ENCODE measurements at regions of chr18 and their contacts with region 1.

Region 1: GRCh38 chr18:63320046-63320689 is 599 bp upstream of the BCL2 start:
- DNase-seq: peak; percentile 90
- ATAC-seq: peak; percentile 70
- H3K4me3 Mint-ChIP-seq: peak overlapping the region; percentile 98
- H3K27ac Mint-ChIP-seq: peak overlapping the region; percentile 95
- H3K4me1 Mint-ChIP-seq: peaks cover 23% of the 10 kb centered on the region
- H3K27me3 Mint-ChIP-seq: no peaks in the 10 kb centered on the region

Region 2: GRCh38 chr18:63016270-63016669 is 303.9 kb before region 1 on chr18:
- CTCF ChIA-PET with region 1: interaction called, 150 read pairs
- POLR2A ChIA-PET with region 1: no interaction called
- intact Hi-C with region 1: loop called (anchors 1 kb)
- DNase-seq: peak; percentile 64
- ATAC-seq: peak; percentile 64
- H3K4me3 Mint-ChIP-seq: no peak overlapping the region
- H3K27ac Mint-ChIP-seq: no peak overlapping the region
- H3K4me1 Mint-ChIP-seq: no peaks in the 10 kb centered on the region
- H3K27me3 Mint-ChIP-seq: peaks cover 13% of the 10 kb centered on the region

Region 3: GRCh38 chr18:63138436-63139340 is 181.5 kb before region 1 on chr18:
- CTCF ChIA-PET with region 1: interaction called, 46 read pairs
- POLR2A ChIA-PET with region 1: interaction called, 4 read pairs
- intact Hi-C with region 1: no loop called
- DNase-seq: peak; percentile 55
- ATAC-seq: peak; percentile 63
- H3K4me3 Mint-ChIP-seq: peak overlapping the region; percentile 72
- H3K27ac Mint-ChIP-seq: peak overlapping the region; percentile 70
- H3K4me1 Mint-ChIP-seq: peaks cover 54% of the 10 kb centered on the region
- H3K27me3 Mint-ChIP-seq: no peaks in the 10 kb centered on the region

Region 4: DNA sequence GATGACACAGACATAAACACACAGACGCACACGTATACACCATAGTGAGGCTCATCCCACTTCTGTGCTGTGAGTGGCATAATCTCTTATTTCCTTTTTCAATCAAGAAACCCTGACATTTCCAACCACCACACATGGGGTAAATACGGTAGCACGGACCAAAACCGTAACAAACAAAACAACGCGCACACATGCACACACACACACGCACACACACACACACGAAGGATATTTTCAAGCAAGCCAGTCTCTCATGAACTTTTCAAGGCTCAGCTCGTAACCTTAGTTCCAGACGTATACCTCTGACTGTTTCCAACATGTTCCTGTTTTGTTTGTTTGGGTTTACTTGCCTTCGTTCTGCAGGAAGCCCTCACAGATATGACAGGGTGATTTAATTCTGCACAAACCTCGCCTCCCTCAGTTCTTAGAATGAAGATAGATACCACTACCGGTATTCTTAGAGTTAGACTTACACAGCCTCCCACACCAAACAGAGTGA is 120.4 kb before region 1 on chr18:
- CTCF ChIA-PET with region 1: interaction called, 7 read pairs
- POLR2A ChIA-PET with region 1: interaction called, 3 read pairs
- intact Hi-C with region 1: loop called in 1 of 2 experiments (anchors 5 kb)
- DNase-seq: peak; percentile 56
- ATAC-seq: peak; percentile 82
- H3K4me3 Mint-ChIP-seq: no peak overlapping the region
- H3K27ac Mint-ChIP-seq: no peak overlapping the region
- H3K4me1 Mint-ChIP-seq: peaks cover 42% of the 10 kb centered on the region
- H3K27me3 Mint-ChIP-seq: no peaks in the 10 kb centered on the region

Region 5: GRCh38 chr18:63224630-63225029 is 95.5 kb before region 1 on chr18:
- CTCF ChIA-PET with region 1: interaction called, 11 read pairs
- POLR2A ChIA-PET with region 1: no interaction called
- intact Hi-C with region 1: no loop called
- DNase-seq: peak; percentile 72
- ATAC-seq: peak; percentile 99
- H3K4me3 Mint-ChIP-seq: peak overlapping the region; percentile 26
- H3K27ac Mint-ChIP-seq: peak overlapping the region; percentile 86
- H3K4me1 Mint-ChIP-seq: peaks cover 67% of the 10 kb centered on the region
- H3K27me3 Mint-ChIP-seq: no peaks in the 10 kb centered on the region

Region 6: DNA sequence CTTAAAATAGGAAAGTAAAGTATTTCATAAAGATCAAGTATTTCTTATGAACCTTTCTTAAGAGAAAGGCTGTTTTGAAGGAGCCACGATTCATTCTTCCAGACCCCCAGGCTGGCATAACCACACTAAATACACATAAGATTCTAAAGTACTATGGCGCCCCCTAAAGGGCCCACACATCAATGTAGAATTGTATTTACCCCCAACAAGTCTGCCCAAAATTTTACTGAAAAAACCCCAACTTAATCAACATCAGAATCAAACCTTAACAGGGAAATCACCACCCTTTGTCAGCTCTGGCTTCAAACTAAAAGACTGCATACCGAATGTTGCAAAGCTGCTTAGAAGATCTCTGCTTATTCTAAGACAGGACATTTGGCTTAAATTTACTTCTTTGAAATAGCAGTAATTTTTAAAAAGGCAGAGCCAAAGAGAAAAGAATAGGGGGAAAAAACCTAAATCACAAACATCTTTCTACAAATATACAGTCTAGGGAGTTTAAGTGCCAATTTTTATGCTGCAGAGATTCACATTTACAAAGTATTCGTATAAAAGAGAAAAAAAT is 19.8 kb after region 1 on chr18:
- CTCF ChIA-PET with region 1: interaction called, 33 read pairs
- POLR2A ChIA-PET with region 1: no interaction called
- intact Hi-C with region 1: no loop called
- DNase-seq: peak; percentile 67
- ATAC-seq: peak; percentile 58
- H3K4me3 Mint-ChIP-seq: no peak overlapping the region
- H3K27ac Mint-ChIP-seq: no peak overlapping the region
- H3K4me1 Mint-ChIP-seq: peaks cover 14% of the 10 kb centered on the region
- H3K27me3 Mint-ChIP-seq: no peaks in the 10 kb centered on the region

Region 7: GRCh38 chr18:63439334-63439733 is 119.2 kb after region 1 on chr18:
- CTCF ChIA-PET with region 1: interaction called, 9 read pairs
- POLR2A ChIA-PET with region 1: no interaction called
- intact Hi-C with region 1: loop called (anchors 5 kb)
- DNase-seq: peak; percentile 56
- ATAC-seq: peak; percentile 36
- H3K4me3 Mint-ChIP-seq: no peak overlapping the region
- H3K27ac Mint-ChIP-seq: no peak overlapping the region
- H3K4me1 Mint-ChIP-seq: no peaks in the 10 kb centered on the region
- H3K27me3 Mint-ChIP-seq: peaks cover 3% of the 10 kb centered on the region

Region 8: DNA sequence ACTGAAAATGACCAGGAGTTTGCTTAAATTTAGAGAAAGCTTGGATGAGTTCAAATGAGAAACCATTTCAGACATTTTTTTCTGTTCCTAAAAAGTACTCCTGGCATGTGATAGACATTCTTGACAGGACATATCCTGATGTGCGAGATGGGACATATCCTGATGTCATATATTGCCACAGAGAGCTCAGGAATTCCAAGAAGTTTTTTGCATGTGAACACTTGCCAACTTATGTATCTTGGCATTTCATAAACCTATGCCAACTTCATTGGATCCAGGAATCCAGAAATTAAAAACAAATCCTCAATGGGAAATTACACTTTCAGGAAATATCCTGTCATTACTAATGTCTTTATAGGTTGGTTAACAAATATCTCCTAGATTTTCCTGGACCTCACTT is 344.4 kb after region 1 on chr18:
- CTCF ChIA-PET with region 1: no interaction called
- POLR2A ChIA-PET with region 1: no interaction called
- intact Hi-C with region 1: no loop called
- DNase-seq: no peak
- ATAC-seq: no peak
- H3K4me3 Mint-ChIP-seq: no peak overlapping the region
- H3K27ac Mint-ChIP-seq: no peak overlapping the region
- H3K4me1 Mint-ChIP-seq: no peaks in the 10 kb centered on the region
- H3K27me3 Mint-ChIP-seq: no peaks in the 10 kb centered on the region

Region 9: DNA sequence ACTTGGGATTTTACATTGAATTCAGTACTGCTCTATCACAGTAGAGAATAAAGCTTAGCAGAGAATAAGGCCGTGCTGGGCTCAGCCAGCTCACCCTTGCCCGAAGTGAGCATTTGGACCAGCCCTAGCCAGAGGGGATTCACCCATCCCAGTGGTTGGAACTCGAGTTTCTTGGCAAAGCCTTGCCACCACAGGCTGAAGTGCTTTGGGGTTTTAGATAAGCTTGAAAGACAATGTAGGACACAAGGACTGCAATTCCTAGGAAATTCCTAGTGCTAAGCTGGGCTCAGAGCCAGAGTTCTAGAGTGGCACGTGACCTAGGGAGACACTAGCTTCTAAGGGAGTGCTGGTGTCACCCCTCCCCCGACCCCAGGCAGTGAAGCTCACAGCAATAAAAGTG is 410.6 kb after region 1 on chr18:
- CTCF ChIA-PET with region 1: no interaction called
- POLR2A ChIA-PET with region 1: no interaction called
- intact Hi-C with region 1: no loop called
- DNase-seq: no peak
- ATAC-seq: no peak
- H3K4me3 Mint-ChIP-seq: no peak overlapping the region
- H3K27ac Mint-ChIP-seq: no peak overlapping the region
- H3K4me1 Mint-ChIP-seq: no peaks in the 10 kb centered on the region
- H3K27me3 Mint-ChIP-seq: peaks cover 4% of the 10 kb centered on the region

Region 10: GRCh38 chr18:64103979-64104378 is 783.8 kb after region 1 on chr18:
- CTCF ChIA-PET with region 1: no interaction called
- POLR2A ChIA-PET with region 1: no interaction called
- intact Hi-C with region 1: no loop called
- DNase-seq: no peak
- ATAC-seq: no peak
- H3K4me3 Mint-ChIP-seq: no peak overlapping the region
- H3K27ac Mint-ChIP-seq: no peak overlapping the region
- H3K4me1 Mint-ChIP-seq: no peaks in the 10 kb centered on the region
- H3K27me3 Mint-ChIP-seq: no peaks in the 10 kb centered on the region

Measured in activated CD4-positive, alpha-beta T cell treated with anti-CD3 and anti-CD28 coated beads for 36 hours (primary cell).